PC-9 (cell line): ENCODE measurements at regions of chr10 and their contacts with region 1.

Region 1: GRCh38 chr10:103888113-103888841 is 29.7 kb downstream of the STN1 start:
- DNase-seq: peak in 1 of 2 experiments; percentile 54
- H3K4me3 ChIP-seq: no peak overlapping the region
- H3K27ac ChIP-seq: peak overlapping the region; percentile 99
- H3K4me1 ChIP-seq: peaks cover 55% of the 10 kb centered on the region
- H3K27me3 ChIP-seq: no peaks in the 10 kb centered on the region
- CTCF ChIP-seq: peak; percentile 82

Region 2: GRCh38 chr10:103598654-103599115 is 289.6 kb before region 1 on chr10:
- CTCF ChIA-PET with region 1: interaction called, 5 read pairs
- POLR2A ChIA-PET with region 1: no interaction called
- intact Hi-C with region 1: loop called (anchors 1 kb)
- DNase-seq: peak; percentile 35 to 42
- H3K4me3 ChIP-seq: no peak overlapping the region
- H3K27ac ChIP-seq: no peak overlapping the region
- H3K4me1 ChIP-seq: no peaks in the 10 kb centered on the region
- H3K27me3 ChIP-seq: no peaks in the 10 kb centered on the region
- CTCF ChIP-seq: peak; percentile 68

Region 3: DNA sequence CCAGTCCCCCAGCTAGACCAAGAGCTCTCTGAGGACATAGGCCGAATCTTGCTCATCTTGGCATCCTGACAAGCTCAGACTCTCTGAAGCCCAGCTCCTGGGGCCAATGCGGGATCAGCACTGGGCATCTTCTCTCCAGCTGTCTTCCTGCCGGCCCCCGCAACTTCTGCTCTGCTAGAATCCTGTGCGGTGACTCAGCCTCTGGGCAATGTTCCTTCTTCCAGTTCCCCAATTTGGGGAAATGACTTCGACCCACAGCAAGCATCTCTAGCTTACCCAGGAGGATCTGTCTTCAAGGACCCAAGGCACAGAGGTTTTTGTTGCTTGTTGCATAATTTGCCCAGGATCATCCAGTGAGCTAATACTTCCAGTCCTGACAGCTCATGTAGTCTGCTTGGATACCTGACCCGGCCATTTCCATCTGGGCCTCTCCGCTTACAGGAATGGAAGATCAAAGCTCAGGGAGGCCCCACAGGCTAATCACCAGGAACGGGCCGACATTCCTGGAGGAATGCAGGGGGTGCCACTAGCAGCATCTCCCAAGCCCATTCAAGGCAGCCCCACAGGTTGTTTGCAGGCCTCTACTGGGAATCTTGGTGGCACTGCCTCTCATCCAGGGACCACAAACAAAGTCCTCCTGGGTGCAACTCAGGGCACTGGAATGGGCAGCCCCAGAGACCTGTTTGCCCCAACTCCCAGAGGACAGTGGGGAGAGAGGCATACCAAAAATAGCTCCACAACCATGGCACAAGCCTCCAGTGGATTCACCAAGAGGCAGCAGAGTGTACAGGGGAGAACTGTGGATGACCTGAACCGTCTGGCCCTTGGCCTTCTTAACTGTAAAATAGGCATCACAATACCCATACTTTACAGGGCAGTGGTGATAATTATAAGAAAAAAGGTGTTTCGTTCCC is 242.9 kb before region 1 on chr10:
- CTCF ChIA-PET with region 1: no interaction called
- POLR2A ChIA-PET with region 1: no interaction called
- intact Hi-C with region 1: no loop called
- DNase-seq: no peak
- H3K4me3 ChIP-seq: no peak overlapping the region
- H3K27ac ChIP-seq: no peak overlapping the region
- H3K4me1 ChIP-seq: no peaks in the 10 kb centered on the region
- H3K27me3 ChIP-seq: no peaks in the 10 kb centered on the region
- CTCF ChIP-seq: no peak

Region 4: DNA sequence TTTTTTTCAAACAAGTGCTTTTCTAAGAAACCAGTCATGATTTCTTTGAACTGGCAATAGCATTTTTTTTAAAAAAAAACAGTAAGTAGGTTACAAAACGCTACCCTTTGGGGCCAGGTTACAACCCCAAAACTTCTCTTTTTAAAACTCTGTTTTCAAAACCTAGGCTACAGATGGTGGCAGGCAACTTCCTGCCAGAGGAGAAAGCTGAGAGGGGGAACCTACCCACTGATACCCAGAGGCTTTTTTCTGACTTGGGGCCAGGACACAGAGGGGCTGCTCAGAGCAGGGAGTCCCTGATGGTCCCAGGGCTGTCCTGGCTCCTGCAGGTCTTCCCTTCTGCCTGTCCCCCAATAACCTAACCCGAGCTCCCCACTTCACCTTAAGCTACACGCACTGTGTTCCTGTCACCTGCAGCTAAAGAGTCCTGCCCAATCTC is 22.8 kb after region 1 on chr10:
- CTCF ChIA-PET with region 1: interaction called, 14 read pairs
- POLR2A ChIA-PET with region 1: no interaction called
- intact Hi-C with region 1: loop called (anchors 1 kb)
- DNase-seq: no peak
- H3K4me3 ChIP-seq: no peak overlapping the region
- H3K27ac ChIP-seq: 0 out of 2 replicates have a peak overlapping the region, but pooled peaks have one; percentile 73
- H3K4me1 ChIP-seq: peaks cover 48% of the 10 kb centered on the region
- H3K27me3 ChIP-seq: no peaks in the 10 kb centered on the region
- CTCF ChIP-seq: no peak

Region 5: GRCh38 chr10:104028146-104028545 is 139.9 kb after region 1 on chr10:
- CTCF ChIA-PET with region 1: interaction called, 3 read pairs
- POLR2A ChIA-PET with region 1: no interaction called
- intact Hi-C with region 1: loop called (anchors 10 kb)
- DNase-seq: no peak
- H3K4me3 ChIP-seq: no peak overlapping the region
- H3K27ac ChIP-seq: no peak overlapping the region
- H3K4me1 ChIP-seq: no peaks in the 10 kb centered on the region
- H3K27me3 ChIP-seq: no peaks in the 10 kb centered on the region
- CTCF ChIP-seq: peak; percentile 38; the same call in 1 of the 2 replicates

Region 6: GRCh38 chr10:104197364-104197763 is 309.1 kb after region 1 on chr10:
- CTCF ChIA-PET with region 1: no interaction called
- POLR2A ChIA-PET with region 1: no interaction called
- intact Hi-C with region 1: loop called (anchors 1 kb)
- DNase-seq: peak; percentile 9 to 74
- H3K4me3 ChIP-seq: no peak overlapping the region
- H3K27ac ChIP-seq: no peak overlapping the region
- H3K4me1 ChIP-seq: peaks cover 14% of the 10 kb centered on the region
- H3K27me3 ChIP-seq: no peaks in the 10 kb centered on the region
- CTCF ChIP-seq: no peak

Region 7: GRCh38 chr10:104622598-104623209 is 734.4 kb after region 1 on chr10:
- CTCF ChIA-PET with region 1: interaction called, 3 read pairs
- POLR2A ChIA-PET with region 1: no interaction called
- intact Hi-C with region 1: loop called (anchors 5 kb)
- DNase-seq: peak in 1 of 2 experiments; percentile 24
- H3K4me3 ChIP-seq: no peak overlapping the region
- H3K27ac ChIP-seq: no peak overlapping the region
- H3K4me1 ChIP-seq: no peaks in the 10 kb centered on the region
- H3K27me3 ChIP-seq: no peaks in the 10 kb centered on the region
- CTCF ChIP-seq: peak; percentile 54